Activated CD4-positive, alpha-beta T cell treated with anti-CD3 and anti-CD28 coated beads, Interleukin-2, amount 10 ng/mL, durations not matched to agents 24 days and 14 days (primary cell): ENCODE measurements at regions of chr11 and their contacts with region 1.

Region 1: GRCh38 chr11:120172054-120172911 is 34.4 kb upstream of the TRIM29 start:
- DNase-seq: peak; percentile 85
- H3K4me3 Mint-ChIP-seq: no peak overlapping the region
- H3K27ac Mint-ChIP-seq: no peak overlapping the region
- H3K4me1 Mint-ChIP-seq: peaks cover 4% of the 10 kb centered on the region
- H3K27me3 Mint-ChIP-seq: peaks cover 66% of the 10 kb centered on the region

Region 2: GRCh38 chr11:119728651-119729580 is 443.4 kb before region 1 on chr11 and contains the start of gene NECTIN1:
- intact Hi-C with region 1: loop called (anchors 1 kb)
- DNase-seq: peak; percentile 96
- H3K4me3 Mint-ChIP-seq: peak within 1 kb of the TSS; percentile 85
- H3K27ac Mint-ChIP-seq: peak within 1 kb of the TSS; percentile 58
- H3K4me1 Mint-ChIP-seq: peaks cover 15% of the 10 kb centered on the region
- H3K27me3 Mint-ChIP-seq: peaks cover 73% of the 10 kb centered on the region
- total RNA-seq, gene NECTIN1: 3.1 and 5.7 TPM in 2 replicates

Region 3: DNA sequence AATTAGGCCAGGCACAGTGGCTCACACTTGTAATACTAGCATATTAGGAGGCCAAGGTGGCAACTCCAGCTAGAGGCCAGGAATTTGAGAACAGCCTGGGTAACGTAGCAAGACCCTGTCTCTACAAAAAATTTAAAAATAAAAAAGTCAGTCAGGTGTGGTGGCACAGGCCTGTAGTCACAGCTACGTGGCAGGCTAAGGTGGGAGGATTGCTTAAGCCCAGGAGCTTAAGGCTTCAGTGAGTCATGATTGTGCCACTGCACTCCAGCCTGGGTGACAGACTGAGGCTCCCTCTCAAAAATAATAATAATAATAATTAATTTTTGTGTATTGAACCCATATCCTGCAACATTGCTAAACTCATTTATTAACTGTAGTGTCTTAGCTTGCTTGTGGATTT is 19.1 kb before region 1 on chr11:
- intact Hi-C with region 1: no loop called
- DNase-seq: peak; percentile 5
- H3K4me3 Mint-ChIP-seq: no peak overlapping the region
- H3K27ac Mint-ChIP-seq: no peak overlapping the region
- H3K4me1 Mint-ChIP-seq: no peaks in the 10 kb centered on the region
- H3K27me3 Mint-ChIP-seq: peaks cover 41% of the 10 kb centered on the region

Region 4: GRCh38 chr11:120229451-120230424 is 57.5 kb after region 1 on chr11:
- intact Hi-C with region 1: loop called (anchors 1 kb)
- DNase-seq: peak; percentile 70
- H3K4me3 Mint-ChIP-seq: no peak overlapping the region
- H3K27ac Mint-ChIP-seq: no peak overlapping the region
- H3K4me1 Mint-ChIP-seq: no peaks in the 10 kb centered on the region
- H3K27me3 Mint-ChIP-seq: peaks cover 24% of the 10 kb centered on the region

Region 5: GRCh38 chr11:120303004-120303637 is 130.8 kb after region 1 on chr11:
- intact Hi-C with region 1: loop called (anchors 1 kb)
- DNase-seq: peak; percentile 90
- H3K4me3 Mint-ChIP-seq: no peak overlapping the region
- H3K27ac Mint-ChIP-seq: no peak overlapping the region
- H3K4me1 Mint-ChIP-seq: peaks cover 2% of the 10 kb centered on the region
- H3K27me3 Mint-ChIP-seq: peaks cover 30% of the 10 kb centered on the region

Region 6: GRCh38 chr11:121727942-121728341 is 1555.7 kb after region 1 on chr11:
- intact Hi-C with region 1: no loop called
- DNase-seq: no peak
- H3K4me3 Mint-ChIP-seq: no peak overlapping the region
- H3K27ac Mint-ChIP-seq: no peak overlapping the region
- H3K4me1 Mint-ChIP-seq: no peaks in the 10 kb centered on the region
- H3K27me3 Mint-ChIP-seq: peaks cover 29% of the 10 kb centered on the region